Left ventricle myocardium superior (tissue), 1 donor: ENCODE measurements at regions of chr19 and their contacts with region 1.

Region 1: GRCh38 chr19:39792999-39793546 is 14.4 kb downstream of the LEUTX start:
- DNase-seq: peak; percentile 86
- ATAC-seq: peak; percentile 99

Region 2: DNA sequence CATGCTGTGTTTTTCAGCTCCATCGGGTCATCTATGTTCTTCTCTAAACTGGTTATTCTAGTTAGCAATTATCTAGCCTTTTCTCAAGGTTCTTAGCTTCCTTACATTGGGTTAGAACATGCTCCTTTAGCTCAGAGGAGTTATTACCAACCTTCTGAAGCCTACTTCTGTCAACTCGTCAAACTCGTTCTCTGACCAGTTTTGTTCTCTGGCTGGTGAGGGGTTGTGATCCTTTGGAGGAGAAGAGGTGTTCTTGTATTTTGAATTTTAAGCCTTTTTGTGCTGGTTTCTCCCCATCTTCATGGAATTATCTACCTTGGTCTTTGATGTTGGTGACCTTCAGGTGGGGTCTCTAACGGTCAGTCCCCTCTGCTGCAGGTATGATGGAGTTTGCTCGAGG is 169.9 kb before region 1 on chr19:
- intact Hi-C with region 1: no loop called
- DNase-seq: no peak
- ATAC-seq: no peak

Region 3: DNA sequence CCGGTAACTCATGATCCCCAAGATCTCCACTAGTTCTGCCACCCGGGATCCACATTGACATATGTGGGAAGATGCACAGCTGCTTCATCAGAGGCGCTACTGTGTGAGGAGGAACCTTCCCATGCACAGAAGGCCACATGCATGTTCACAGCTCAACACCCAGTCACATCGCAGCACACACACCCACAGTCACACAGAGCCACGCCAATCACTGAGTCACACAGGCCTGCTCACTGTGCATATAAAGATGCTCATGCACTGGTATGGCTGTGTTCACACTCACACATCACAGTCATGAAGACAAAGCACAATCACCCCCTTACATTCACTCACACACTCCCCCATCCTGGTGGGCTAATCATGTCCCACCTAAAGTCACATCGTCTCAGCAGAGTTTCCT is 65.0 kb before region 1 on chr19:
- intact Hi-C with region 1: no loop called
- DNase-seq: no peak
- ATAC-seq: no peak

Region 4: DNA sequence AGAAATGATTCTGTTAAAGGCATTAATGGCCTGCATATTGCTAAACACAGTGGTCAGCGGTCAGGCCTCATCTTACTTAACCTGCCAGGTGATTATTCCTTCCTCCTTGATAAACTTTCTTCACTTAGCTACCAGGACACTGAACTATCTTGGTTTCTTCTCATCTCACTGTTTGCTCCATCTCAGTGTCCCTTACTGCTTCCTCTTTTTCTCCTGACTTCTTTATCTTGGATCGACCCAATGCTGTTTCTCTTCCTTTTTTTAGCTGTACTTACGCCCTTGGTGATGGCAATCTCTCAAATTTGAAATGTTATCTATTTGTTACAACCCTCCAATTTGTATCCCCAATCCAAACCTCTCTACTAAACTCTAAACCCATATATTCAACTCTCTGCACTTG is 47.4 kb before region 1 on chr19:
- intact Hi-C with region 1: no loop called
- DNase-seq: no peak
- ATAC-seq: no peak

Region 5: DNA sequence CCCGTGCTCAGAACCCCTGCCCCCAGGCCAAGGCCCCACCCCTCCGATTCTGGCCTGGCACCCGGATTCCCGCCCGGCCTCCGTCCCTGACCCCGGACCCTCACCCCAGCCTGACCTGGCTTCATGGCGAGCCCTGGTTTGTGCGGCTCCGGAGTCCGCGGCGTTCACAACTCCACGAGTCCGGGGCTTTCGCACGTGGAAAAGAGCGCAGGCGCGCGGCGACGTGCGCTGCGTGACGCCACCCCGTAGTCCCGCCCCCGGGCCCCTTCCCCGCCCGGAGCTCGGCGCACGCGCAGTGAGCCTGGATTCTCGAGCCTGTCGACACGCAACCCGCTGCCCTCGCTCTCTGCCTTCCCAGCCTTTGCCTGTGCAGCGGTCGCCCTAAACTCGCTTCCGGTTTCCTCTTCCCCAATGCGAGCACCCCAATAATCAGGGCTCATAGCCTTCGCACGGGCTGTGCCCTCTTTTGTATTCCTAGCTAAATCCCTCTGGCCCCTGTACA is 53.2 kb after region 1 on chr19 and contains the start of gene FBL:
- intact Hi-C with region 1: loop called (anchors 10 kb)
- DNase-seq: peak; percentile 99
- ATAC-seq: peak; percentile 98
- total RNA-seq, gene FBL: 57.3 TPM

Region 6: GRCh38 chr19:40204381-40204780 is 411.3 kb after region 1 on chr19:
- intact Hi-C with region 1: no loop called
- DNase-seq: no peak
- ATAC-seq: no peak